Left lung (tissue), 14 donors: ENCODE measurements at regions of chr22 and their contacts with region 1.

Region 1: DNA sequence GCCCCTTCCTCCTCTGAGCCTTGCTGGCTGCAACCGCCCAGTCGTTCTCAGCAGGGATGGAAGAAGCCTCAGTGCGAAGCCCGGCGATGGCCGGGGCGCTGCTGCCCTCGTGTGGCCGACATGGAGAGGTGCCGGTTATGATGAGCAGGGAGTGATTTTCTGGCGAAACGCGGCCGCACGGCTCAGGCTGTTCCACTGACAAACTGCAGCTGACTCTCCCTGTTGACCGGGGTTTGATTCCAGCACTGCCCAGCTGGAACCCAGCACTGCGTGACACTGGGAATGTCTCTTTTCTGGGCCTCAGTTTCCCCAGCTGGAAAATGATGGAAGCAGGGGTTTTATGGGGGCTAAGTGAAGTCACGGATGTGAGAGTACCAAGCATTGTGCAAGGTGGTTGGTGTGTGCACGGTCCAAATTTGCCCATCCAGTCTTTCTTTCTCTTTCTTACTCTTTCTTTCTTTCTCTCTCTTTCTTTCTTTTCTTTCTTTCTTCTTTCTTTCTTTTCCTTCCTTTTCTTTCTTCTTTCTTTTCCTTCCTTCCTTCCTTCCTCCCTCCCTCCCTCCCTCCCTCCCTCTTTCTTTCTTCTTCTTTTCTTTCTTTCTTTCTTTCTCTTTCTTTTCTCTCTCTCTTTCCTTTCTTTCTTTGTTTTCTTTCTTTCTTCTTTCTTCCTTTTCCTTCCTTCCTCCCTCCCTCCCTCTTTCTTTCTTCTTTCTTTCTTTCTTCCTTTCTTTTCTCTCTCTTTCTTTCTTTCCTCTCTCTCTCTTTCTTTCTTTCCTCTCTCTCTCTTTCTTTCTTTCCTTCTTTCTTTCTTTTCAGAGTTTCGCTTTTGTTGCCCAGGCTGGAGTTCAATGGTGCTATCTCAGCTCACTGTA is 25.8 kb upstream of the MPPED1 start:
- DNase-seq: peak; percentile 79 to 95 (median 87)
- ATAC-seq: peak; percentile 97
- H3K4me3 ChIP-seq: no peak overlapping the region
- H3K27ac ChIP-seq: no peak overlapping the region
- H3K4me1 ChIP-seq: peaks cover 0 to 12% of the 10 kb centered on the region in 2 donors
- H3K27me3 ChIP-seq: peaks cover 0 to 42% of the 10 kb centered on the region in 2 donors
- CTCF ChIP-seq: peak; percentile 85 to 87

Region 2: GRCh38 chr22:43230971-43231723 is 154.9 kb before region 1 on chr22:
- intact Hi-C with region 1: loop called in 1 of 2 experiments (anchors 5 kb)
- DNase-seq: peak in 2 of 4 donors; percentile 55 to 57
- ATAC-seq: peak; percentile 85
- H3K4me3 ChIP-seq: no peak overlapping the region
- H3K27ac ChIP-seq: no peak overlapping the region
- H3K4me1 ChIP-seq: peaks cover 0 to 7% of the 10 kb centered on the region in 2 donors
- H3K27me3 ChIP-seq: no peaks in the 10 kb centered on the region
- CTCF ChIP-seq: peak; percentile 86 to 88

Region 3: DNA sequence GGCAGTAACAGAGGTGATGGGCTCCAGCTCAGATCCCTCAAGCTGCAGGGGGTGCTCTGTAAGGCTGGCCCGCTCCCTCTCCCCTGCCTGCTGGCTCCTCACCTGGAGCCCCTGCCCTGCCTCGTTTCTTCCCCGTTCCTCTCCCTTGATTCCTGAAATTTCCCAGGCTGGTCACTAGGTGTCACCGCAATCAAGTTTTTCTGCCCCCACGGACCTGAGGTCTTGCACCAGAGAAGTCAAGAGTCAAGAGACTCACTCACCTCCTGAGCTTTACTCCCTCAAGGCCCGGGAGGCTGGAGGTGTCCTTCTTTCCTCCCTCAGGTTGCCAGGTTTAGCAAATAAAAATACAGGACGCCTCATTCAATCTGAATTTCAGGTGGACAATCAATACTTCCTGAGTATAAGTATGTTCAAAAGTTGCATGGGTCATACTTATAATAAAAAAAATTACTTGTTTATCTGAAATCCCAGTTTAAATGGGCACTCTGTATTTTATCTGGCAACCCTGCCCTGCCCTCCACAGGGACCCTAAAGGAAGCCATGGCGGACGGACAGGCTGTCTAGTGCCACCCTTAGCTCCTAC is 112.0 kb before region 1 on chr22:
- intact Hi-C with region 1: loop called in 1 of 2 experiments (anchors 10 kb)
- DNase-seq: peak in 1 of 4 donors; percentile 66
- ATAC-seq: peak; percentile 84
- H3K4me3 ChIP-seq: no peak overlapping the region
- H3K27ac ChIP-seq: no peak overlapping the region
- H3K4me1 ChIP-seq: peaks cover 0 to 7% of the 10 kb centered on the region in 2 donors
- H3K27me3 ChIP-seq: no peaks in the 10 kb centered on the region
- CTCF ChIP-seq: peak; percentile 53 to 60

Region 4: GRCh38 chr22:43500792-43501785 is 115.1 kb after region 1 on chr22:
- intact Hi-C with region 1: no loop called
- DNase-seq: peak in 1 of 4 donors; percentile 76
- ATAC-seq: no peak
- H3K4me3 ChIP-seq: no peak overlapping the region
- H3K27ac ChIP-seq: no peak overlapping the region
- H3K4me1 ChIP-seq: no peaks in the 10 kb centered on the region
- H3K27me3 ChIP-seq: peaks cover 0 to 15% of the 10 kb centered on the region in 2 donors
- CTCF ChIP-seq: no peak

Region 5: GRCh38 chr22:43884600-43885325 is 498.8 kb after region 1 on chr22:
- intact Hi-C with region 1: loop called in 1 of 2 experiments (anchors 10 kb)
- DNase-seq: peak in 2 of 4 donors; percentile 45 to 86
- ATAC-seq: peak; percentile 74
- H3K4me3 ChIP-seq: no peak overlapping the region
- H3K27ac ChIP-seq: no peak overlapping the region
- H3K4me1 ChIP-seq: no peaks in the 10 kb centered on the region
- H3K27me3 ChIP-seq: peaks cover 0 to 78% of the 10 kb centered on the region in 2 donors
- CTCF ChIP-seq: peak; percentile 74 to 78